ENCODE measurements at regions of chr4 and their contacts with region 1.

Region 1: GRCh38 chr4:170671171-170671570 is 581.4 kb upstream of the AADAT start:
- DNase-seq: no peak
- ATAC-seq: no peak
- H3K4me3 ChIP-seq: no peak overlapping the region
- H3K27ac ChIP-seq: no peak overlapping the region
- H3K4me1 ChIP-seq: no peaks in the 10 kb centered on the region
- H3K27me3 ChIP-seq: no peaks in the 10 kb centered on the region
- CTCF ChIP-seq: no peak

Region 2: DNA sequence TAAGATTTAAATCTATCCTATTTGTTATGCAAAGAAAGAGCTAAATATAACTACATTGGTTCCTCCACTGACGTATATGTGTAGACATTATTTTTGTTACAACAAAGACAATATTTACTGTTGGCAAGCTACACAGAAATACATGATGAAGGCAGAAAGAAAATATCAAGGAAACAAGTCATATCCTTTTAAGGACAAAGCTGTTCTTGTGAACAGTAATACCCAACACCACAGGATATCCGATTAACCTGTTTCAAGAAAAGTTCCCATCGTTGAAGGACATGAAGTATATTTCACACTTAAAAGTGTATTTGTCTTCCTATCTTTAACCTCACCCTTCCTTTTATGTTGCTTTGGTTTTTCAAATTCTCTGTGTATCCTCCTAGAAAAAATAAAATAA is 345.6 kb before region 1 on chr4:
- intact Hi-C with region 1: no loop called
- DNase-seq: no peak
- ATAC-seq: no peak
- H3K4me3 ChIP-seq: no peak overlapping the region
- H3K27ac ChIP-seq: no peak overlapping the region
- H3K4me1 ChIP-seq: no peaks in the 10 kb centered on the region
- H3K27me3 ChIP-seq: no peaks in the 10 kb centered on the region
- CTCF ChIP-seq: no peak

Region 3: DNA sequence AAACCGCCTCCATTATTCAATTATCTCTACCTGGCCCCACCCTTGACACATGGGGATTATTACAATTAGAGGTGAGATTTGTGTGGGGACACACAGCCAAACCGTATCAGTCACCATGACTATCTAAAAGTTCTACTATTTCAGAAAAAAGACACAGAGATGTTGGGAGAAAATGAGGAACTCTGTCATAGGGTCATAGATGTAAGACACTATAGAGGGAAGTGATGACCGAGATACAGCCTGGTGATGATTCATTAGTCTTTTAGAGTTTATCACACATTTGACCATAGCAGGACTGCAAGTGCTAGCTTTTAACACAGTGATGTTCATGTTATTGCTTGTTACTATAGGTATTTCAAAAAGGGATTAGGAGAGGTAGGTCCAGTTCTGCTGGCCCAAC is 224.4 kb before region 1 on chr4:
- intact Hi-C with region 1: no loop called
- DNase-seq: no peak
- ATAC-seq: no peak
- H3K4me3 ChIP-seq: no peak overlapping the region
- H3K27ac ChIP-seq: no peak overlapping the region
- H3K4me1 ChIP-seq: no peaks in the 10 kb centered on the region
- H3K27me3 ChIP-seq: no peaks in the 10 kb centered on the region
- CTCF ChIP-seq: no peak

Region 4: DNA sequence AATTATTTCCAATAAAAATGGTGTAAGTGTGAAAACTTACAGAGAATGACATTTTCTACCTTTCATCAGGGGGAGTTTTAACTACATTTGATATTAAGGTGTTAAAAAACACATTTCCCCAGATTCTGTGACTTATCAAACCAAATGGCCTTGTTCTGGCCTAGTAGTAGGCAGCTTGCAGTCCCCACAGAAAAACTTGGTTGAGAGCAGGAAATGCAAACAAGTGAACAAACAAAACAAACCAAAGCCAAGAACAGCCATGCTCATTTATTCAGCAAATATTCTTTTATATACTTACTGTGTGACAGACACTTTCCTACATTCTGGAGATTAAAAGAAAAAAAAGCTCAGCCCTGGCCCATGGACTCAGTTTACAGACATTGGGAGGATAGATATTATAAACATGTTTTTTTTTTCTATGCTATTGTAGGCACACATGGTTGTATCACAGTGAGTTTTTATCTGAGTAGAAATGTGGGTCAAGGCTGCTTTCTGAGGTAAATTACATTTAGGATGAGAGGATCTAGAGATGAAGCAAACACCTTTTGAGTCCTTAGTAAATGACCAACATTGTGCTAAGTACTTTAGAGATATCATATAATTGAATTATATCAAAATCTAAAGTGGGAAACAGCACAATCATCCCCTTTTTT is 132.2 kb before region 1 on chr4:
- intact Hi-C with region 1: no loop called
- DNase-seq: no peak
- ATAC-seq: no peak
- H3K4me3 ChIP-seq: no peak overlapping the region
- H3K27ac ChIP-seq: no peak overlapping the region
- H3K4me1 ChIP-seq: no peaks in the 10 kb centered on the region
- H3K27me3 ChIP-seq: no peaks in the 10 kb centered on the region
- CTCF ChIP-seq: no peak

Region 5: DNA sequence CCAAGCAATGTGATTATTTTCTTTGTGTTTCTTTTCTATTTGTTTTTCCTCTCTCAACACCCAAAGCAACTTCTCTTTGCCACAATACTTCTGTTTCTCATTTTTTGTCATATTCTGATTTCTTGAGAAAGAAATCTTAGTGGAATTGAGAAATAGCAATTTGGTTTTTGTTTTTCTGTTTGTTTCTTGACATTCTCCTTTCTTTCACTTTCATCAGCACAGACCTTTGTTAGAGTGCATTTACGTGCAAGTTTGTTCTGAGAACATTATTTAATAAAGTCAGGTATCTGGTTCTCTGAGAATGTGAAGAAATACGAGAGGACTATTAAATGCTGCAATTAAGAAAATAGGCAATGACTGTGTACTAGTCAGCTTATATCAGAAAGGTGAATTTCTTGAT is 26.7 kb after region 1 on chr4:
- intact Hi-C with region 1: loop called in 1 of 10 experiments (anchors 1 kb)
- DNase-seq: no peak
- ATAC-seq: no peak
- H3K4me3 ChIP-seq: no peak overlapping the region
- H3K27ac ChIP-seq: no peak overlapping the region
- H3K4me1 ChIP-seq: no peaks in the 10 kb centered on the region
- H3K27me3 ChIP-seq: no peaks in the 10 kb centered on the region
- CTCF ChIP-seq: no peak